HepG2 (cell line): ENCODE measurements at regions of chr12 and their contacts with region 1.

Region 1: DNA sequence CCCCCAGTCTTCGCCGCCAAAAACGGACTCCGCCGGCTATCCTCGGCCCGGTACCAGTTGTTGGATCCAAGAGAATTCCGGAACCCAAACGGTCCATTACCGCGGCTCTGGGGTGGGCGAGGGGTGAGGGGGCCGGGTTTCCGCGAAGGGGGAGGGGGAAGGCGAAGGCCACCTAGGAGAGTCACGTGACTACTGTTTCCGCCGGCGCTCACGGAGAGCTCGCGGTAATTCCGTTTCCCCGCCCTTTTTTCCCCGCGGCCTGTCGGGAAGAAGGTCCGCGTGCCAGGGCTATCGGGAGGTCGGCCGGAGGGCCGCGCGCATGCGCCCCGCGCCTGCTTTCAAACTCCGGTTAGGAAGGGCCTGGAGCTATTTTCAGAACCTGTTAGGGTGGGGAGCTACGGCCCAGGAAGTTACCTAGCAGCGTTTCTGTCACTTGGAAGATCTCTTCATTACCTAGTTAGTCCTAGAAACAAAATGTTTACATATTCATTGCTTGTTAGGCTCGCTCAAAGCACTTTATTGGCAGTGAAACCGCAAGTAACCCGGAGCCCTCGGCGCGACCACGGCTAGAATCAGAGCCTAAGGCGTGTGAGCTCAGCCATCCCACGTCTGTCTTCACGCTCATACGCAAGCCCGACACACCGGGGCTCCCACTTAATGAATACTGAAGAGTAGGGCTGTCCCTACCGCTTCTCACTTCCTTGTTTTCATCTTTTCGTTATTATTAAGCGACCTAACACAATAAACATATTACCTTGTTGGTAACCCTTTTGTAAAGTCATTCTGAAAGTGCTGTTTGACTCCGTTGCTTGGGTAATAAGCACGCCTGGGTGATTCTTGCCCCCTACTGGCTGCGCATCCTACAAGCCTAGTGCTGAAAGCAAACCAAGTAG is 624 bp upstream of the SBNO1 start:
- DNase-seq: peak; percentile 96
- ATAC-seq: peak; percentile 83
- H3K4me3 ChIP-seq: peak overlapping the region; percentile 94 to 98 (median 96)
- H3K27ac ChIP-seq: peak overlapping the region; percentile 97
- H3K4me1 ChIP-seq: peaks cover 31% of the 10 kb centered on the region
- H3K27me3 ChIP-seq: no peaks in the 10 kb centered on the region; a peak in 1 of 5 replicates
- CTCF ChIP-seq: peak; percentile 86
- EP300 ChIP-seq: peak in 1 of 2 experiments; percentile 20; a peak in 1 of 4 replicates
- POLR2A ChIP-seq: peak; percentile 79 to 89
- RAD21 ChIP-seq: peak; percentile 41

Region 2: DNA sequence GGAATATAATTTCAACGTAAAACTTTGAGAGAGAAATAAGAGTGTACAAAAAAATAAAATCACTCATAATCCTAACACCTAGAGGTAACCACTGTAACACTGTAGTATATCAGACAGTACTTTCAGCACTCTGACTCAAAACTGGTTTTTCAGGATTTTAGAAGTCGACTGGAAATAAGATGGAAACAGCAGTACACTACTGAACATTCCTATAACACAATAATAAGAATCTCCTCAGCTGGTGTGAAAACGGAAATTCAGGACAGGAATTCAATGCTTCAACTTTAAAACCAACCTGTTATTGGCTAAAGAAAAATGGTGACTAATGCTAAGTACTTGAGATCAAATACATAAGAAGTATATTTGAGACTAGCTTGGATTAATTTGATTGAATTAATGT is 202.0 kb before region 1 on chr12:
- CTCF ChIA-PET with region 1: no interaction called
- POLR2A ChIA-PET with region 1: no interaction called
- in situ Hi-C with region 1: no loop called
- intact Hi-C with region 1: no loop called
- DNase-seq: no peak
- ATAC-seq: no peak
- H3K4me3 ChIP-seq: no peak overlapping the region
- H3K27ac ChIP-seq: no peak overlapping the region
- H3K4me1 ChIP-seq: peaks cover 38% of the 10 kb centered on the region
- H3K27me3 ChIP-seq: no peaks in the 10 kb centered on the region
- CTCF ChIP-seq: no peak
- EP300 ChIP-seq: no peak
- POLR2A ChIP-seq: no peak
- RAD21 ChIP-seq: no peak

Region 3: DNA sequence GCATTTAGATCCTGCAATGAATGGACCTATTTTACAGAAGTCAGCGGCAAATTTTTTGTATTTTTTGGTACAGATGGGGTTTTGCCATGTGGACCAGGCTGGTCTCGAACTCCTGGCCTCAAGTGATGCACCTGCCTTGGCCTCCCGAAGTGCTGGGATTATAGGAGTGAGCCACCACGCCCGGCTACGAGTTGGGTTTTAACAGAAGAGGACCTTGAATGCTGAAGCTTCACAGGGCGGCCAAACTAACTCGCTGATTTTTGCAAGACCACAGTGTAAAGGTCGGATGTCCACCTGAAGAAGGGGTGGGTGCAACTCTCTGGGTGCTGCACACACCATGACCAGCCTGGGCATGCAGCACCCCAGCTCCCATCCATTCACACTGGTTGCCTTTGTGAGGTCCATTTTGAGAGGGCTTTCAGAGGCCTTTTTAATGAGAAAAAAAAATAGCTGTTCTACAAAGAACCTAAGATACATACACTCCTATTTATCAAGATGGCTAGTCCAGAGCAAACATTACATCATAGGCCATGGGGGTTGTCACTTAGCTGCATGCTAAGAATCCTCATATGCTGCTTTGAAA is 72.0 kb before region 1 on chr12:
- CTCF ChIA-PET with region 1: no interaction called
- POLR2A ChIA-PET with region 1: interaction called, 14 read pairs
- in situ Hi-C with region 1: no loop called
- intact Hi-C with region 1: no loop called
- DNase-seq: peak; percentile 83
- ATAC-seq: peak; percentile 93
- H3K4me3 ChIP-seq: no peak overlapping the region
- H3K27ac ChIP-seq: peak overlapping the region; percentile 76
- H3K4me1 ChIP-seq: peaks cover 31% of the 10 kb centered on the region
- H3K27me3 ChIP-seq: no peaks in the 10 kb centered on the region
- CTCF ChIP-seq: peak; percentile 10; the same call in 1 of the 2 replicates
- EP300 ChIP-seq: peak in 1 of 2 experiments; percentile 48; a peak in 2 of 4 replicates
- POLR2A ChIP-seq: no peak
- RAD21 ChIP-seq: no peak

Region 4: GRCh38 chr12:123351349-123351748 is 13.9 kb before region 1 on chr12:
- CTCF ChIA-PET with region 1: no interaction called
- POLR2A ChIA-PET with region 1: interaction called, 11 read pairs
- in situ Hi-C with region 1: no loop called
- intact Hi-C with region 1: no loop called
- DNase-seq: no peak
- ATAC-seq: no peak
- H3K4me3 ChIP-seq: no peak overlapping the region
- H3K27ac ChIP-seq: no peak overlapping the region
- H3K4me1 ChIP-seq: peaks cover 11% of the 10 kb centered on the region; the same call in 1 of the 2 replicates
- H3K27me3 ChIP-seq: no peaks in the 10 kb centered on the region
- CTCF ChIP-seq: no peak
- EP300 ChIP-seq: no peak
- POLR2A ChIP-seq: no peak
- RAD21 ChIP-seq: no peak

Region 5: GRCh38 chr12:123382684-123383083 is 17.4 kb after region 1 on chr12:
- CTCF ChIA-PET with region 1: no interaction called
- POLR2A ChIA-PET with region 1: interaction called, 121 read pairs
- in situ Hi-C with region 1: no loop called
- intact Hi-C with region 1: loop called (anchors 1 kb)
- DNase-seq: no peak
- ATAC-seq: no peak
- H3K4me3 ChIP-seq: peak overlapping the region; percentile 66 to 73 (median 68)
- H3K27ac ChIP-seq: peak overlapping the region; percentile 85
- H3K4me1 ChIP-seq: peaks cover 46% of the 10 kb centered on the region
- H3K27me3 ChIP-seq: no peaks in the 10 kb centered on the region
- CTCF ChIP-seq: no peak
- EP300 ChIP-seq: no peak
- POLR2A ChIP-seq: no peak
- RAD21 ChIP-seq: no peak

Region 6: DNA sequence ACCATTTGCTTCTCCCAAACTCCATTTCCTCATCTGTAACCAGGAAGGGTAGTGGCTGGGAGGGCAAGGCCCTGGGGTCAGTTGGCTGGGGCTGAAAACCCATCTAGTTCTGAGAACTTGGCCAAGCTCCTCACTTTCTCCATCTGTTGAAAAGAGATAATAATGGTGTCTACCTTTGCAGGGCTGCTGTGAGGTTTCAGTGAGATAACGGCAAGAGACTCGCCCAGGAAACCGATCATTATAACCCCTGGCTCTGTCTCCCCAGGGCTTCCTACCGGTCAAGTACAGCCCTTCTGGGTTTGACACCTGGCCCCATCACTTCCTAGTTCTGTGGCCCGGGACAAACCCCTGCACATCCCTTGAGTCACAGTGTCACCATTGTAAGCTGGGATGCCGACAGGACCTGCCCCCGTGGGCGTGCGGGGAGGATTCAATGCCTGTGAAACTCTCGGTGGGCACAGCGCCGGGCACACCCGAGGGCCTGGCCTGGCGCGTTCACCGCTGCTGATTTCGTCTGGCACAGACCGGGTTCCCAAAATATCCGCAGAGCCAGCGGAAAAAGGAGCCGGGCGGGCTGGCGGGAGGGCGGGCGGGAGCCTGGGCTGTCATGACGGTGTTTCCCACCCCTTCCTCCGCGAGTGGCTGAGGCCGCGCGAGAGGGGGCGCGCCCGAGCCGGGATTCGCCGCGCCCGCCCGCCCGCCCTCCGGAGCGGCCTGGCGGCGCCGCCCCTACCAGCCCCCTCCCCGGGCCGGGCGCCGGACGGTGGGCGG is 23.1 kb after region 1 on chr12:
- CTCF ChIA-PET with region 1: no interaction called
- POLR2A ChIA-PET with region 1: interaction called, 121 read pairs
- in situ Hi-C with region 1: no loop called
- intact Hi-C with region 1: loop called (anchors 1 kb)
- DNase-seq: peak; percentile 58
- ATAC-seq: peak; percentile 34
- H3K4me3 ChIP-seq: peak overlapping the region; percentile 78 to 85 (median 81)
- H3K27ac ChIP-seq: peak overlapping the region; percentile 64
- H3K4me1 ChIP-seq: peaks cover 48% of the 10 kb centered on the region
- H3K27me3 ChIP-seq: no peaks in the 10 kb centered on the region
- CTCF ChIP-seq: peak; percentile 28; the same call in 1 of the 2 replicates
- EP300 ChIP-seq: no peak
- POLR2A ChIP-seq: no peak; a peak in 1 of 4 replicates
- RAD21 ChIP-seq: no peak

Region 7: GRCh38 chr12:123457980-123458783 is 92.9 kb after region 1 on chr12 and contains the start of gene SNRNP35:
- CTCF ChIA-PET with region 1: no interaction called
- POLR2A ChIA-PET with region 1: interaction called, 10 read pairs
- in situ Hi-C with region 1: no loop called
- intact Hi-C with region 1: no loop called
- DNase-seq: peak; percentile 74
- ATAC-seq: peak; percentile 82
- H3K4me3 ChIP-seq: peak within 1 kb of the TSS; percentile 77 to 92 (median 91)
- H3K27ac ChIP-seq: peak within 1 kb of the TSS; percentile 100
- H3K4me1 ChIP-seq: peaks cover 23% of the 10 kb centered on the region
- H3K27me3 ChIP-seq: no peaks in the 10 kb centered on the region; a peak in 1 of 5 replicates
- CTCF ChIP-seq: peak; percentile 14; the same call in 1 of the 2 replicates
- EP300 ChIP-seq: peak in 1 of 2 experiments; percentile 71; a peak in 2 of 4 replicates
- POLR2A ChIP-seq: peak; percentile 69; a peak in 3 of 4 replicates
- RAD21 ChIP-seq: no peak; the same call in 1 of the 2 replicates
- total RNA-seq, gene SNRNP35: 21.9 and 22.6 TPM in 2 replicates

Region 8: GRCh38 chr12:123571343-123571813 is 206.1 kb after region 1 on chr12:
- CTCF ChIA-PET with region 1: no interaction called
- POLR2A ChIA-PET with region 1: interaction called, 13 read pairs
- in situ Hi-C with region 1: no loop called
- intact Hi-C with region 1: no loop called
- DNase-seq: peak; percentile 56
- ATAC-seq: peak; percentile 93
- H3K4me3 ChIP-seq: peak overlapping the region; percentile 37 to 56 (median 38); a peak in 5 of 6 replicates
- H3K27ac ChIP-seq: no peak overlapping the region
- H3K4me1 ChIP-seq: peaks cover 29% of the 10 kb centered on the region
- H3K27me3 ChIP-seq: no peaks in the 10 kb centered on the region; a peak in 1 of 5 replicates
- CTCF ChIP-seq: no peak
- EP300 ChIP-seq: no peak
- POLR2A ChIP-seq: no peak
- RAD21 ChIP-seq: no peak